CD8-positive, alpha-beta memory T cell (primary cell): ENCODE measurements at regions of chr11 and their contacts with region 1.

Region 1: DNA sequence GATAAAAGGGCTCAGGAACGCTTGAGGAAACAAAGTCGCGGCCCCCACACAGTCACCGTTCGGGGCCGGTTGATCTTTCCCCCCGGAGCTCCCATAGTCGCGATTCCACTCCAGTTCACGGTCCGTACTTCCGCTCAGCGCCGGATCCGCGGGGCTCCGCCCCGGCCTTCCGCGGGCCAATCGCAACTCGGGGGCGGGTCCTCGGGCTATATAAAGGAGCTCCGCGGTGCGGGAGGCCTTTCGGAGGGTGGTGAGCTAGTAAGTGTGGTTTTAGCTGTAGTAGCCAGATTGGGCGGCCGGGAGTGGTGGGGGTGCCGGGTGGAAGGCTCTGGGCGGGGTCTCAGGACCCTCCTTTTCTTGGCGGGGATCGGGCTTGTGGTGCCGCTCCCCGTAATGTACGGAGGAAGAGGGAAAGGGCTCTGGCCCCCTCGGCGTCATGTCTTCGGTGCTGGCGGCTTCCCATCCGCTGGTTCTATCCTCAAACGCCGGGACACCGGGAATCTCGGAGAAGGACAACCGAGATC is at the starts of genes C11orf98 and CSKMT:
- DNase-seq: peak; percentile 89 to 97 (median 94)
- H3K4me3 ChIP-seq: peak within 1 kb of the TSS; percentile 98
- H3K4me3 Mint-ChIP-seq: peak within 1 kb of the TSS; percentile 96 to 100 (median 97)
- H3K27ac ChIP-seq: peak within 1 kb of the TSS; percentile 89
- H3K27ac Mint-ChIP-seq: peak within 1 kb of the TSS; percentile 94 to 99 (median 96)
- H3K4me1 ChIP-seq: peaks cover 24% of the 10 kb centered on the region
- H3K4me1 Mint-ChIP-seq: peaks cover 33 to 53% (median 33%) of the 10 kb centered on the region in 3 donors
- H3K27me3 ChIP-seq: no peaks in the 10 kb centered on the region
- H3K27me3 Mint-ChIP-seq: peaks cover 0 to 4% of the 10 kb centered on the region in 2 donors
- total RNA-seq, gene C11orf98: 178 to 182 TPM
- total RNA-seq, gene CSKMT: 43.1 to 48.3 TPM

Region 2: DNA sequence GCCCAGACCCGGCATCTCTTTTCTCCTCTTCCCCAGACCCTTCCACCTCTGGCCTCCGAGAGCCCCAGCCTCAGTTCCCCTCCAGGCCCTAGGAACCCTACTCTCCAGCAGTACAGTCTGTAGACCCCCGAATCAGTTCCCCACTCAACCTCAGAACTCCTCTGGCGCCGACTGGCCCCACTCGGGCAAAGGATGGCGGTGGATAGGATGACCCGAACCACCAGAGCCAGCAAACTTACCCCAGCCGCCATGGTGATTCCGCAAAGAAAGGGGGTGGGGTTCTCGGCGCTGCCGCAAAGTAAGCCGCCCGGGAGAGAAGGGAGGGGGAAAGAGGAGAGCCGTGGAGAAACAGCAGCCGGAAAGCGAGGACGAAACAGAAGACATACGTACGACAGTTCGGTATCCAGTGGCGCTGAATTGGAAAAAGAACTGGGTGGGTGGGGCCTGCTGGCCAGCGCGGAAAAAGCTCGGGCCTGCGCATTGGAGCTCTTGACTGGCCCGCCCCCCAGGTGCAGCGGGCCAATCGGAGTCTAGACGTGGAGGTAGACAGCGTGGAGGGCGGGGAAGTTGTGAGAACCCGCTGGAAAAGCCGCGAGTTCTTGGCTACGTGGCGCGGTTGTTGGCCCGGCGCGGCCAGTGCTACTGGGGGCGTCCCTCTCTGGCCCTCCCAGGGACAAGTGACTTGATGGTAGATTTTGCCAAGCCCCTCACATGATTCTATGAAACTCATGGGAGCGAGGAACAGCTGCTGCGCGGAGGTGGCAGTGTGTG is 91.4 kb before region 1 on chr11 and contains the start of gene EEF1G:
- CTCF ChIA-PET with region 1: interaction called, 4 read pairs
- POLR2A ChIA-PET with region 1: interaction called, 10 read pairs
- DNase-seq: peak; percentile 96 to 100 (median 99)
- H3K4me3 ChIP-seq: peak within 1 kb of the TSS; percentile 94
- H3K4me3 Mint-ChIP-seq: peak within 1 kb of the TSS; percentile 90 to 98 (median 96)
- H3K27ac ChIP-seq: peak within 1 kb of the TSS; percentile 93
- H3K27ac Mint-ChIP-seq: peak within 1 kb of the TSS; percentile 90 to 97 (median 95)
- H3K4me1 ChIP-seq: peaks cover 24% of the 10 kb centered on the region
- H3K4me1 Mint-ChIP-seq: peaks cover 46 to 59% (median 52%) of the 10 kb centered on the region in 3 donors
- H3K27me3 ChIP-seq: no peaks in the 10 kb centered on the region
- H3K27me3 Mint-ChIP-seq: no peaks in the 10 kb centered on the region
- total RNA-seq, gene EEF1G: 1,800 to 1,846 TPM

Region 3: GRCh38 chr11:62621567-62622470 is 43.3 kb before region 1 on chr11 and contains the start of gene B3GAT3:
- CTCF ChIA-PET with region 1: interaction called, 3 read pairs
- POLR2A ChIA-PET with region 1: interaction called, 22 read pairs
- DNase-seq: peak; percentile 95 to 98 (median 97)
- H3K4me3 ChIP-seq: peak within 1 kb of the TSS; percentile 94
- H3K4me3 Mint-ChIP-seq: peak within 1 kb of the TSS; percentile 90 to 96 (median 94)
- H3K27ac ChIP-seq: peak within 1 kb of the TSS; percentile 80
- H3K27ac Mint-ChIP-seq: peak within 1 kb of the TSS; percentile 89 to 100 (median 97)
- H3K4me1 ChIP-seq: peaks cover 16% of the 10 kb centered on the region
- H3K4me1 Mint-ChIP-seq: peaks cover 15 to 28% (median 26%) of the 10 kb centered on the region in 3 donors
- H3K27me3 ChIP-seq: no peaks in the 10 kb centered on the region
- H3K27me3 Mint-ChIP-seq: peaks cover 0 to 1% of the 10 kb centered on the region in 2 donors
- total RNA-seq, gene B3GAT3: 67.4 to 68.2 TPM

Region 4: GRCh38 chr11:62678770-62679696 is 13.9 kb after region 1 on chr11 and contains the start of gene UBXN1:
- CTCF ChIA-PET with region 1: interaction called, 17 read pairs
- POLR2A ChIA-PET with region 1: interaction called, 14 read pairs
- DNase-seq: peak; percentile 75 to 87 (median 81)
- H3K4me3 ChIP-seq: peak within 1 kb of the TSS; percentile 97
- H3K4me3 Mint-ChIP-seq: peak within 1 kb of the TSS; percentile 80 to 96 (median 90)
- H3K27ac ChIP-seq: peak within 1 kb of the TSS; percentile 86
- H3K27ac Mint-ChIP-seq: peak within 1 kb of the TSS; percentile 89 to 99 (median 95)
- H3K4me1 ChIP-seq: peaks cover 19% of the 10 kb centered on the region
- H3K4me1 Mint-ChIP-seq: peaks cover 26 to 38% (median 37%) of the 10 kb centered on the region in 3 donors
- H3K27me3 ChIP-seq: no peaks in the 10 kb centered on the region
- H3K27me3 Mint-ChIP-seq: no peaks in the 10 kb centered on the region
- total RNA-seq, gene UBXN1: 142 to 143 TPM

Region 5: DNA sequence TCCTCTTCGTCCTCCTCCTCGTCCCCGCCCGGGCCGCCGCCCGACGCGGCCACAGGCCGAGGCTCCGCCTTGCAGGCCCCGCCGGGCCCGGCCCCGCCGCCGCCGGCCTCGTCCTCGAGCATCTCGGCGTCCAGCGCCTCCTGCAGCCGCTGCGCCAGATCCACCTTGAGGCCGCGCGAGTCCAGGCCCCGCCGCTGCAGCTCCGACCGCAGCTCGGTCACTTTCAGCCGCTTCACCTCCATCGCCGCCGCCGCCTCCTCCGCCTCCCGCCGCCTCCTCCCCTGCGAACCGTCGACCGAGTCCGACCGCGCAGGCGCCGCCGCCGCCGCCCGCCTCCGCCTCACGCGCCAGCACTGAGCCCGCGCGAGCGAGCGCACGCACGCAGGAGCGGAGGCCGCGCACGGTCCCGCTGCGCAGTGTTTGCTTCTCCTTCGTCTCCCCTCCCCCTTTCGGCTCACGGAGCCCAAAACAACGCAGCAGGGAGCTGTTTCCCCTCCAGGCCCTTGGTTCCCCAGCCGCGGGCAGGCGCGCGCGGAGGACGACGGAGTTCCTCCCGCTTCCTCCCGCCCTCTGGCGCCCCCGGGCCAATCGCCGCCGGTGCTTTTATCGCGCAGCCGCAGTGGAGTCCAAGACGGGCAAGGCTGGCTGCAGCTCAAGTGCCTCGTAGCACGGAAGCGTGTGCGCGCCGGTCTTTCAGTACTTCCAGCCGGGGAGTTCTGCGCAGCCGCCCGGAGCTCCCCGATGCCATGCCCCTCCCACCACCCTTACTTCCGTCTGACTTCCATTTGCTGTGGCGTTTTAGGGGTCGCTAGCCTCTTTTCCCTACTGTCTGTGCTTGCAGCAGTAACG is 62.0 kb after region 1 on chr11 and contains the start of gene HNRNPUL2:
- CTCF ChIA-PET with region 1: interaction called, 5 read pairs
- POLR2A ChIA-PET with region 1: interaction called, 26 read pairs
- DNase-seq: peak; percentile 98 to 99 (median 99)
- H3K4me3 ChIP-seq: peak within 1 kb of the TSS; percentile 99
- H3K4me3 Mint-ChIP-seq: peak within 1 kb of the TSS; percentile 92 to 99 (median 98)
- H3K27ac ChIP-seq: peak within 1 kb of the TSS; percentile 90
- H3K27ac Mint-ChIP-seq: peak within 1 kb of the TSS; percentile 95 to 99 (median 98)
- H3K4me1 ChIP-seq: peaks cover 43% of the 10 kb centered on the region
- H3K4me1 Mint-ChIP-seq: peaks cover 55 to 64% (median 63%) of the 10 kb centered on the region in 3 donors
- H3K27me3 ChIP-seq: no peaks in the 10 kb centered on the region
- H3K27me3 Mint-ChIP-seq: peaks cover 0 to 3% of the 10 kb centered on the region in 2 donors
- total RNA-seq, gene HNRNPUL2: 58.7 to 64.3 TPM

Region 6: DNA sequence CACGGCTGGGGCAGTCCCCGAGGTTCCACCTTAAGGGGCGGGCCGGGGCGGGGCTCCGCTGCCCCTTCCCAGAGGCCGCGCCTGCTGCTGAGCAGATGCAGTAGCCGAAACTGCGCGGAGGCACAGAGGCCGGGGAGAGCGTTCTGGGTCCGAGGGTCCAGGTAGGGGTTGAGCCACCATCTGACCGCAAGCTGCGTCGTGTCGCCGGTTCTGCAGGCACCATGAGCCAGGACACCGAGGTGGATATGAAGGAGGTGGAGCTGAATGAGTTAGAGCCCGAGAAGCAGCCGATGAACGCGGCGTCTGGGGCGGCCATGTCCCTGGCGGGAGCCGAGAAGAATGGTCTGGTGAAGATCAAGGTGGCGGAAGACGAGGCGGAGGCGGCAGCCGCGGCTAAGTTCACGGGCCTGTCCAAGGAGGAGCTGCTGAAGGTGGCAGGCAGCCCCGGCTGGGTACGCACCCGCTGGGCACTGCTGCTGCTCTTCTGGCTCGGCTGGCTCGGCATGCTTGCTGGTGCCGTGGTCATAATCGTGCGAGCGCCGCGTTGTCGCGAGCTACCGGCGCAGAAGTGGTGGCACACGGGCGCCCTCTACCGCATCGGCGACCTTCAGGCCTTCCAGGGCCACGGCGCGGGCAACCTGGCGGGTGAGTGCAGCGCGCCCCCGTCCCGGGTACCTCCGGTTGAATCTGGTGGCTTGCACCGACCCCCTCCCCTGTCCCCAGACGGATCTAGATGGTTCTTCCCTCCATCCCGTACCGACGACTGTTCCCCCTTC is 215.9 kb after region 1 on chr11 and contains the start of gene SLC3A2:
- CTCF ChIA-PET with region 1: interaction called, 4 read pairs
- POLR2A ChIA-PET with region 1: interaction called, 12 read pairs
- DNase-seq: peak; percentile 82 to 89 (median 85)
- H3K4me3 ChIP-seq: peak within 1 kb of the TSS; percentile 99
- H3K4me3 Mint-ChIP-seq: peak within 1 kb of the TSS; percentile 99 to 100 (median 100)
- H3K27ac ChIP-seq: peak within 1 kb of the TSS; percentile 99
- H3K27ac Mint-ChIP-seq: peak within 1 kb of the TSS; percentile 96 to 100 (median 99)
- H3K4me1 ChIP-seq: peaks cover 39% of the 10 kb centered on the region
- H3K4me1 Mint-ChIP-seq: peaks cover 51 to 54% (median 54%) of the 10 kb centered on the region in 3 donors
- H3K27me3 ChIP-seq: no peaks in the 10 kb centered on the region
- H3K27me3 Mint-ChIP-seq: no peaks in the 10 kb centered on the region
- total RNA-seq, gene SLC3A2: 426 to 430 TPM

Region 7: GRCh38 chr11:62948765-62949320 is 283.7 kb after region 1 on chr11:
- CTCF ChIA-PET with region 1: no interaction called
- POLR2A ChIA-PET with region 1: no interaction called
- DNase-seq: no peak
- H3K4me3 ChIP-seq: no peak overlapping the region
- H3K4me3 Mint-ChIP-seq: no peak overlapping the region
- H3K27ac ChIP-seq: no peak overlapping the region
- H3K27ac Mint-ChIP-seq: no peak overlapping the region
- H3K4me1 ChIP-seq: no peaks in the 10 kb centered on the region
- H3K4me1 Mint-ChIP-seq: no peaks in the 10 kb centered on the region
- H3K27me3 ChIP-seq: no peaks in the 10 kb centered on the region
- H3K27me3 Mint-ChIP-seq: peaks cover 8 to 66% of the 10 kb centered on the region in 2 donors

Region 8: DNA sequence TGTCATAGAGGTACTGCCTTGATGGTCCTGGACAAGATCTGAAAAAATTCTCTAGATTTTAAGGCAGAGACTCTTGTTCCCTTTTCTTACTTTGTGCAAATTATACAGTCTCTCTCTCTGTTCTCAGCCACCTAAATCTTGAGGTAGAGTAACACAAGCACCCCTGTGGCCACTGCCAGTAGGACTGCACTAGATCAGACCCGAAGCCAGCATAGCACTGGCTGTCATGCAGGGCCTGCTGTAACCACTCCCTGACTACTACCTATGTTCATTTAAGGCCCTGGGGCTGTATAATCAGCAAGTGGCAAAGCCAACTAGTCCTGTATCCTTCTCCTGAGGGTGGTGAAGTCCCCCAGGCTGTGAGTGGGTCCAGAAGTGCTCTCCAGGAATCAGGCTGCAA is 490.7 kb after region 1 on chr11:
- CTCF ChIA-PET with region 1: no interaction called
- POLR2A ChIA-PET with region 1: no interaction called
- DNase-seq: no peak
- H3K4me3 ChIP-seq: no peak overlapping the region
- H3K4me3 Mint-ChIP-seq: no peak overlapping the region
- H3K27ac ChIP-seq: no peak overlapping the region
- H3K27ac Mint-ChIP-seq: no peak overlapping the region
- H3K4me1 ChIP-seq: no peaks in the 10 kb centered on the region
- H3K4me1 Mint-ChIP-seq: no peaks in the 10 kb centered on the region
- H3K27me3 ChIP-seq: no peaks in the 10 kb centered on the region
- H3K27me3 Mint-ChIP-seq: peaks cover 30 to 59% of the 10 kb centered on the region in 2 donors